Activated CD4-positive, alpha-beta T cell treated with anti-CD3 and anti-CD28 coated beads for 36 hours (primary cell): ENCODE measurements at regions of chr5 and their contacts with region 1.

Region 1: DNA sequence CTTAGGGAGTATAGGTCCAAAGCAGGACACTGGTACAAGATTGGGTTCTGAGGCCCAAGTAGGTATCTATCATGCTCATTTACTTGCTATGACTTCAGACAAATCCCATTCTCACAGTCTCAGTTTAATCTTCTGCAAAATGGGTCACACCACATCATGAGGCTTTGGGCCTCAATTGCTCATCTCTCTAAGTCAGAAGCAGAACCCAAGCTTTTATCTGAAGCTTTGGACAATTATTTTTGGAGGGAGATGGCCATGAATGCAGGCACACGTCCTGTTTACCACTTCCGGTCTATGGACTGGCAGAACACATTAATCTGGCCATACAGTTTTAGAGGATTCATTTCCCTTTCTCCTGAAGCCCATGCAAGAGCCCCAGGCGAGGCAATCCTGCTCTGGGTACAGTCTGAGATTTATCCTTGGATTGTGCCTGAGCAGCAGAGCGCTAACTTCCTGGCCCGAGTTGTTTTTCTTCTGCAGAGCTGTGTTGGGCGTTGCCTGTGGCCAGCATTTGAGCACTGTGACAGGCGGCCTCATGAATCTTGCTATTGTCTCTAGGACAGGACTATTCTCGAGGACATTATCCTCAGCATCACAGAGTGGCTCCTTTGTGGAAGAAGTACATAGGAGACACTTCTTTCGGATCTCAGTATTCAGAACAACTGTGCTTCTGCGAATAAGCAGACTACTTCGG is 16.1 kb downstream of the SLC22A4 start:
- DNase-seq: no peak
- ATAC-seq: no peak
- H3K4me3 Mint-ChIP-seq: no peak overlapping the region
- H3K27ac Mint-ChIP-seq: no peak overlapping the region
- H3K4me1 Mint-ChIP-seq: no peaks in the 10 kb centered on the region
- H3K27me3 Mint-ChIP-seq: no peaks in the 10 kb centered on the region

Region 2: DNA sequence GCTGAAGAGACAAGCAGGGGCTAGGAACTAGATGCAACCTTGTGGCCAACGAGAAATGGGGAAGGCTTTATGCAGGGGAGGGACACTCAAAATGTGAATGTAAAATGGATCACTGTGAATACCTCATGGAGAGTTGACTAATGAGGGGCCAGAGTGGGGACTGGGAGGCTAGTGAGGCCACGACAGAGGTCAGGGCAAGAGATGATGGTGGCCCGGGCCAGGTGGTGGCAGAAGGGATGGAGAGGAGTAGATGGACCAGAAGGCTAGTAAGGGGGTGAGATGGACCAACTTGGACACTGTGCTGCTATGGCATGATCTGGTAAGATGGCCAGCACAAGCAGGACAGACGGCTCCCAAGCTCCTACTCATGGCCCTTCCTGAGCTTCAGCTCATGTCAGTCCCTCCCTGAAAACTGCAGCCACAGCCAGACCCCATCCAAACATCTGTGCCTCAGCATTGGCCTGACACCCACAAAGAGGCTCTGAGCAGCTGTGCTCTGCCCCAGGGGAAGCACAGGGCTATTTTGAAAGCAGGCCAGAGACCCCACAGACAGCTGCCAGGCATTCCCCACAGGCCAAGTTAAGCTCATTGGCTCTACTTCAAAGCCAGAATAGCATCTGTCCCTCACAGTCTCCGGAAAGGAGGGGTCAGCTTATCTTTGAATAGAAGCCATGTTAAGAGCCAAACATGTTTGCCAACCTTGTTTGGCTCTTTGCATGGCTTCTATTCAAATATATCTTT is 104.7 kb before region 1 on chr5:
- CTCF ChIA-PET with region 1: no interaction called
- POLR2A ChIA-PET with region 1: interaction called, 10 read pairs
- intact Hi-C with region 1: no loop called
- DNase-seq: no peak
- ATAC-seq: no peak
- H3K4me3 Mint-ChIP-seq: no peak overlapping the region
- H3K27ac Mint-ChIP-seq: no peak overlapping the region
- H3K4me1 Mint-ChIP-seq: no peaks in the 10 kb centered on the region
- H3K27me3 Mint-ChIP-seq: no peaks in the 10 kb centered on the region